T-cell (primary cell): ENCODE measurements at regions of chr3 and their contacts with region 1.

Region 1: GRCh38 chr3:50245831-50246516 is 10.0 kb downstream of the GNAI2 start:
- DNase-seq: peak; percentile 84 to 99 (median 95)
- ATAC-seq: peak; percentile 84 to 92 (median 87)
- H3K4me3 ChIP-seq: peak overlapping the region; percentile 40 to 58
- H3K4me3 Mint-ChIP-seq: peak overlapping the region; percentile 71 to 78 (median 75)
- H3K27ac ChIP-seq: peak overlapping the region; percentile 82
- H3K27ac Mint-ChIP-seq: peak overlapping the region; percentile 88 to 93
- H3K4me1 ChIP-seq: peaks cover 44 to 100% of the 10 kb centered on the region in 2 experiments
- H3K4me1 Mint-ChIP-seq: peaks cover 84 to 89% (median 87%) of the 10 kb centered on the region in 3 donors
- H3K27me3 ChIP-seq: no peaks in the 10 kb centered on the region
- H3K27me3 Mint-ChIP-seq: no peaks in the 10 kb centered on the region

Region 2: GRCh38 chr3:50192689-50193141 is 53.3 kb before region 1 on chr3:
- CTCF ChIA-PET with region 1: interaction called, 9 to 47 read pairs
- POLR2A ChIA-PET with region 1: interaction called in 1 of 2 experiments, 4 read pairs
- DNase-seq: peak; percentile 58 to 90 (median 79)
- ATAC-seq: peak; percentile 23 to 54 (median 46)
- H3K4me3 ChIP-seq: no peak overlapping the region
- H3K4me3 Mint-ChIP-seq: peak overlapping the region in 1 of 3 donors; percentile 64
- H3K27ac ChIP-seq: no peak overlapping the region
- H3K27ac Mint-ChIP-seq: peak overlapping the region in 1 of 2 donors; percentile 39
- H3K4me1 ChIP-seq: peaks cover 0 to 24% of the 10 kb centered on the region in 2 experiments
- H3K4me1 Mint-ChIP-seq: peaks cover 4 to 14% (median 12%) of the 10 kb centered on the region in 3 donors
- H3K27me3 ChIP-seq: peaks cover 2 to 52% of the 10 kb centered on the region in 2 experiments
- H3K27me3 Mint-ChIP-seq: peaks cover 7 to 10% of the 10 kb centered on the region in 2 donors

Region 3: GRCh38 chr3:50227390-50228183 is 18.4 kb before region 1 on chr3:
- CTCF ChIA-PET with region 1: interaction called, 13 to 60 read pairs
- POLR2A ChIA-PET with region 1: interaction called, 4 read pairs
- DNase-seq: peak; percentile 79 to 95 (median 87)
- ATAC-seq: peak; percentile 85 to 87 (median 87)
- H3K4me3 ChIP-seq: peak overlapping the region; percentile 67 to 95
- H3K4me3 Mint-ChIP-seq: peak overlapping the region; percentile 89 to 93 (median 92)
- H3K27ac ChIP-seq: peak overlapping the region; percentile 55
- H3K27ac Mint-ChIP-seq: peak overlapping the region; percentile 84 to 88
- H3K4me1 ChIP-seq: peaks cover 0 to 32% of the 10 kb centered on the region in 2 experiments
- H3K4me1 Mint-ChIP-seq: peaks cover 19 to 29% (median 27%) of the 10 kb centered on the region in 3 donors
- H3K27me3 ChIP-seq: peaks cover 0 to 6% of the 10 kb centered on the region in 2 experiments
- H3K27me3 Mint-ChIP-seq: peaks cover 0 to 3% of the 10 kb centered on the region in 2 donors

Region 4: DNA sequence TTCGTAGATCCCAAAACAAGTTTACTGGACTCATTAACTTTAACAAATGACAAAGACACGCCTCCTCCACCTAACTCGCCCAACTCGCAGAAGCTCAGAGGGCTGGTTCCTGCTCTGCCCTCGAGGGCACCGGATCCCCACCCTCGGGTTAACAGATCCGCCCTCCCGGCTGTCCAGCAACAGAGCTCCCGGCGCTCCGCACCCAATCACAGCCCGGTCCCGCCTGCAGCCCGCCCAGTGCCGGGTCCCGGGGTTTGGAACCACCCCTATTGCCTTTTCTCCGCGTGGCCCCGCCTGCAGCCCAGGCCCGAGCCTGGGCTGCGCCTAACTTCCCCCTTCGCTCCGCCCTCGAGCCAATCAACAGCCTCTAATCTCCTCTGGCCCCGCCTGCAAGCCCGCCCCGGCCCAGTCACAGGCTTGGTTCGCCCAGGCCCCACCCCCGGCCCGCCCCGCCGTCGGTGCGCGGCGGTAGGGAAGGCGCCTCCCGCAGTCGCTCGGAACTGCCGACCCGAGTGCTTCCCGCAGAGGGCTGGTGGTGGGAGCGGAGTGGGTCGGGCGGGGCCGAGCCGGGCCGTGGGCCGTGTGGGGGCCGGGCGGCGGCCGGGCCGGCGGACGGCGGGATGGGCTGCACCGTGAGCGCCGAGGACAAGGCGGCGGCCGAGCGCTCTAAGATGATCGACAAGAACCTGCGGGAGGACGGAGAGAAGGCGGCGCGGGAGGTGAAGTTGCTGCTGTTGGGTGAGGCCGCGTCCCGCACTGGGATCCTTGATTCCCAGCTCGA is 10.1 kb before region 1 on chr3 and contains the start of gene GNAI2:
- CTCF ChIA-PET with region 1: interaction called, 4 to 31 read pairs
- POLR2A ChIA-PET with region 1: interaction called, 3 to 8 read pairs
- DNase-seq: peak; percentile 96 to 100 (median 99)
- ATAC-seq: peak; percentile 85 to 90 (median 88)
- H3K4me3 ChIP-seq: peak within 1 kb of the TSS; percentile 98 to 99
- H3K4me3 Mint-ChIP-seq: peak within 1 kb of the TSS; percentile 95 to 98 (median 97)
- H3K27ac ChIP-seq: peak within 1 kb of the TSS; percentile 82
- H3K27ac Mint-ChIP-seq: peak within 1 kb of the TSS; percentile 95 to 96
- H3K4me1 ChIP-seq: peaks cover 24 to 50% of the 10 kb centered on the region in 2 experiments
- H3K4me1 Mint-ChIP-seq: peaks cover 34 to 54% (median 39%) of the 10 kb centered on the region in 3 donors
- H3K27me3 ChIP-seq: no peaks in the 10 kb centered on the region
- H3K27me3 Mint-ChIP-seq: no peaks in the 10 kb centered on the region
- total RNA-seq, gene GNAI2: 257 to 313 (median 287) TPM

Region 5: DNA sequence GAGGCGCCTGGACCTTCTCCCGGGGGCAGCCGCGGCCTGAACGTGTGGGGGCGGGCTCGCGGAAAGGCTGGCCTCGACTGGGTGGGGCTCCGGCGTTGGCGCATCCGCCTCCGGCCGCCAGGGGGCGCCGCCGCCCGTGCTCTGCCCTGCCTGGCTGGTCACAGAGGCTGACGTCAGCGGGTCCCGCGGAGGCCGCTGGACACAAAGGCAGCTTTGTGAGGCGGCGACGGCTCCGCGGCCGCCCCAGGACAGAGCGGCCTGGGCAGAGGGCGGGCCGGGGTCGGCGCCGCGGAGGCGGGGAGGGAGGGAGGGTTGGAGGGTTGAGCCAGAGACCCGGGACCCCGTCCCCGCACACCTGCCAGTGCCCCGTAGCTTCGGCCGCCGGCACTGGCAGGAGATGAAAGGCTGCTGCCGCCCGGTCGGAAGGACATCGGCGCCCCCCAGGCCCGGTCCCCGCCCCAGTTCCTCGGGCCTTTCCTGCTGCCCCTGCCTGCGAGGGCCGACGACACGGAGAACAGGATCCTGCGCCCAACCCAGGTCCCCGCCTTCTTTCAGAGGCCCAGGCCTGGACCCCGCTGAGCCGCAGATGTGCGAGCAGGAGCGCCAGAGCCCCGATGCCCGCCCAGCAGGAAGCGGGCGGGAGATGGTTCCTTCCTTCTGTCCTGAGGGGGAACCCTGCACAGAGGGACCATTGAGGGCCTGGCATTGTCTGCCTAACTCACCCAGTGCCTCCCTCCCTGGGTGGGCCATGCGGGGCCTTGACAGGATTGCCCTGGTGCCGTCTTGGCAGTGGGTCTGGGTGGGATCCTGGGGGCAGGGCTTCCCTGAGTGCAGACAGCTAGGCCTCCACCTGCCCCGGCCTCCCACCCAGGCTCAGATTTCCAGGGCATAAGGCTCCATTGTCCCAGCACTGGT is 14.3 kb after region 1 on chr3:
- CTCF ChIA-PET with region 1: interaction called, 6 to 17 read pairs
- POLR2A ChIA-PET with region 1: interaction called in 1 of 2 experiments, 10 read pairs
- DNase-seq: peak; percentile 57 to 91 (median 73)
- ATAC-seq: peak; percentile 93 to 96 (median 94)
- H3K4me3 ChIP-seq: peak overlapping the region; percentile 47 to 52
- H3K4me3 Mint-ChIP-seq: peak overlapping the region; percentile 47 to 76 (median 67)
- H3K27ac ChIP-seq: peak overlapping the region; percentile 47
- H3K27ac Mint-ChIP-seq: no peak overlapping the region
- H3K4me1 ChIP-seq: peaks cover 2 to 20% of the 10 kb centered on the region in 2 experiments
- H3K4me1 Mint-ChIP-seq: peaks cover 5 to 8% (median 8%) of the 10 kb centered on the region in 3 donors
- H3K27me3 ChIP-seq: peaks cover 0 to 9% of the 10 kb centered on the region in 2 experiments
- H3K27me3 Mint-ChIP-seq: no peaks in the 10 kb centered on the region

Region 6: DNA sequence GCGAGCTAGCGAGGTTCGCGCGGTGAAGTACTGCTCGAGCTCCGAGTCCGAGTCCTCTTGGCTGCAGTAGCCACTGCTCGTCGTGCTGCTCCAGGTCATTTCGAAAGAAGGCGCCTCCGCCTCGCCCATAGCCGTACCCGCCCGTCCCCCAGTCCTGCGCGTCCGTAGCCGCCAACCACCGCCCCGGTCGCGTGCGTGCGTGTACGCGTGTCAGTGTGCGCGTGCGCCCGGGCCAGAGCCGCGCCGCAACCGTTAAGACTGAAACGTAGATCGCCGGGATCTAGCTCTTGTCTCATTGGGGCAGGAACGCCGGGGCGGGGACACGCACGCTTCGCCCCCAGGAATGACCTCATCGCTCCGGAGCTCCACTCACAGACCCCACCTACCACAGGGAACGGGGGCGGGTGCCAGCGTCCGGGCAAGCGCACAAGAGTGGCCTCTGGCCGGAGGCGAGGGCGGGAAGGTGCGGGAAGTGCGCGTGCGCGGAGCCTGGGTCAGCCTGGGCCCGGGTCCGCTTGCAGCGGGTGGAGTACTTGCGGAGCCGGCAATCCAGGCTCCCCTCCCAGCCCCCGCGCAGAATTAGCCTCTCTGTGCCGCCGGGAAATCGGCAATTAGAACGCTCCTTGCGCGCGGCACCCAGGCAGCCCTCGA is 91.3 kb after region 1 on chr3:
- CTCF ChIA-PET with region 1: interaction called in 1 of 2 experiments, 11 read pairs
- POLR2A ChIA-PET with region 1: no interaction called
- DNase-seq: peak; percentile 80 to 97 (median 90)
- ATAC-seq: peak; percentile 77 to 84 (median 80)
- H3K4me3 ChIP-seq: peak overlapping the region; percentile 68 to 84
- H3K4me3 Mint-ChIP-seq: peak overlapping the region; percentile 86 to 90 (median 88)
- H3K27ac ChIP-seq: peak overlapping the region; percentile 97
- H3K27ac Mint-ChIP-seq: peak overlapping the region; percentile 93 to 95
- H3K4me1 ChIP-seq: peaks cover 32 to 95% of the 10 kb centered on the region in 2 experiments
- H3K4me1 Mint-ChIP-seq: peaks cover 63 to 71% (median 71%) of the 10 kb centered on the region in 3 donors
- H3K27me3 ChIP-seq: no peaks in the 10 kb centered on the region
- H3K27me3 Mint-ChIP-seq: no peaks in the 10 kb centered on the region